ENCODE measurements at regions of chr17 and their contacts with region 1.

Region 1: DNA sequence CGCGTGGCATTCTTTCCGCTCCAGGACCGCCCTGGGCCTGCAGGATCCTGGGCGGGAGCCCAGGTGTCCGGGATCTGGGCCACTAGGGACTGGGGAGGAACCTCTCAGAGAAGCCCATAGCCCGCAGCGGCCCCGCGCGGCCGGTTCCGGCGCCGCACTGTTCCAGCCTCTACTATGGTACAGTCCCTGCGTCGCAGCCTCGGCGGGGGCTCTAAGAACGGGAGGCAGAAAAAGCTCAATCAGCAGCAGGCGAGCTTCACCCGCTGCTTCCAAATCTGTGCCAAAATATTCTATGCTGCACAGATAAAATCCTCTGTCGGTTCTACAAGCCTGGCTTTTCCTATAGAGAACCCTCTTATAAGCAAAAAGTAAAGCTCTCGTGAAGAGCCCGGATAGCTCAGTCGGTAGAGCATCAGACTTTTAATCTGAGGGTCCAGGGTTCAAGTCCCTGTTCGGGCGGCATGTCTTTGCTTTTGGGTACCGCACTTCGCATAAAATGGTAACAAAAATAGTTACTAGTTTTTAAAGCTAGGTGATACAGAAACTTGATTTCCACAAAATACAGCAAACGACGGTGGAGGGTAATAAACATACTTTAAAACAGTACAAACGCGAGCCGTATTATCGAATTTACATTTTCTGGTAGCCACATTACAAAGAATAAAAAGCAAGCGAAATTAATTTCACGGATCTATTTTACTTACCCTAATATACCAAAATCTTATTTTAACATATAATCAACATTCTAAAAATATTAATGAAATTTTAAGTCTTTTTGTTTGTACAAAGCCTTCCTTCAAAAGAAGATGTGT is 661 bp upstream of the ALOXE3 start:
- DNase-seq: peak; percentile 89 to 91
- ATAC-seq: peak; percentile 75 to 89 (median 86)
- H3K4me3 ChIP-seq: peak overlapping the region; percentile 36 to 91 (median 64)
- H3K27ac ChIP-seq: peak overlapping the region; percentile 33 to 85 (median 71)
- H3K4me1 ChIP-seq: peaks cover 22 to 69% (median 55%) of the 10 kb centered on the region in 9 donors
- H3K27me3 ChIP-seq: peaks cover 0 to 78% (median 42%) of the 10 kb centered on the region in 7 donors
- CTCF ChIP-seq: peak; percentile 74 to 97 (median 89)

Region 2: GRCh38 chr17:8079291-8080207 is 39.4 kb before region 1 on chr17:
- intact Hi-C with region 1: loop called in 1 of 10 experiments (anchors 5 kb)
- DNase-seq: peak; percentile 67 to 78
- ATAC-seq: peak; percentile 82 to 94 (median 92)
- H3K4me3 ChIP-seq: peak overlapping the region; percentile 14 to 56 (median 42)
- H3K27ac ChIP-seq: peak overlapping the region in 1 of 10 donors; percentile 53
- H3K4me1 ChIP-seq: peaks cover 3 to 19% (median 14%) of the 10 kb centered on the region in 9 donors
- H3K27me3 ChIP-seq: peaks cover 0 to 98% (median 90%) of the 10 kb centered on the region in 7 donors
- CTCF ChIP-seq: peak; percentile 83 to 96 (median 94)

Region 3: DNA sequence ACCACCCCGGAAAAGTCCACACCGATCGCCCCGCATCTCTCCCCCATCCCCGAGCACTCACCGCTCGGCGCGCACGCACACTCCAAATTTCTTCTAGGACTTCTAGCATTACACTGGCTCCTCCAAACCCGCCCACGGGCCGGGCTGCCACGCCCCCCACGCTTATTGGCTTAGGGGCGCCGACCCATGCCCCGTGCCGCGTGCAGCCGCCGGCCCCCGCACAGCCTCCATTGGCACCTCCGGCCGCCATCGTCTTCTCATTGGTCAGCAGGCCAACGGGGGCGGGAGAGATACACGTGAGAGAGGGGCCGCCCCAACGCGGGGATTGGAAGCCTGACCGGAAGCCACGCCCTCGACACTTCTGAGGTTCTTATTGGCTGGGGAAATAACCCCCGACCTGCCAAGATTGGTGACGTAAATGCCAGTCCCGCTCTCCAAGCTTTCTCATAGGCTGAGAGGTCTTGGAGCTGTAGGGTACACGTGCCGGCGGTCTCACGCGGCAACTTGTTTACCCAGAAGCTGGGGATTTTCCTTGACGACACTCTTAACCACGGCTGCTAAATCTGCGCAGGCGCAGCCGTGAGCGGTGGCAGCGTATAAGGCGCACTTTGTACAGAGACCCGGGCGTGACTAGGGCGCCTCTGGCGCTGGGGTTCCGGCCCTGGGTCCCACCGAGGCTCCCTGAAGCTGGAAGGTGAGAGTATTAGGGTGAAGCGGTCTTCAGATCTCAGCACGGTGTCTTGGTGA is 37.4 kb after region 1 on chr17:
- intact Hi-C with region 1: loop called in 5 of 10 experiments (anchors 1 to 5 kb)
- DNase-seq: peak; percentile 100
- ATAC-seq: peak; percentile 65 to 75 (median 68)
- H3K4me3 ChIP-seq: peak overlapping the region; percentile 66 to 91 (median 81)
- H3K27ac ChIP-seq: peak overlapping the region; percentile 97 to 100 (median 100)
- H3K4me1 ChIP-seq: peaks cover 19 to 91% (median 51%) of the 10 kb centered on the region in 9 donors
- H3K27me3 ChIP-seq: no peaks in the 10 kb centered on the region
- CTCF ChIP-seq: peak in 4 of 9 donors; percentile 12 to 42 (median 28)

Region 4: GRCh38 chr17:8189711-8190477 is 70.9 kb after region 1 on chr17 and contains the start of gene BORCS6:
- intact Hi-C with region 1: loop called (anchors 1 to 10 kb)
- DNase-seq: peak; percentile 96 to 98
- ATAC-seq: peak; percentile 70 to 83 (median 76)
- H3K4me3 ChIP-seq: peak within 1 kb of the TSS; percentile 29 to 90 (median 82)
- H3K27ac ChIP-seq: peak within 1 kb of the TSS; percentile 87 to 99 (median 94)
- H3K4me1 ChIP-seq: peaks cover 11 to 65% (median 42%) of the 10 kb centered on the region in 9 donors
- H3K27me3 ChIP-seq: no peaks in the 10 kb centered on the region
- CTCF ChIP-seq: peak in 4 of 9 donors; percentile 10 to 33 (median 22)
- total RNA-seq, gene BORCS6: 5.3 to 9.4 (median 7.7) TPM

Region 5: DNA sequence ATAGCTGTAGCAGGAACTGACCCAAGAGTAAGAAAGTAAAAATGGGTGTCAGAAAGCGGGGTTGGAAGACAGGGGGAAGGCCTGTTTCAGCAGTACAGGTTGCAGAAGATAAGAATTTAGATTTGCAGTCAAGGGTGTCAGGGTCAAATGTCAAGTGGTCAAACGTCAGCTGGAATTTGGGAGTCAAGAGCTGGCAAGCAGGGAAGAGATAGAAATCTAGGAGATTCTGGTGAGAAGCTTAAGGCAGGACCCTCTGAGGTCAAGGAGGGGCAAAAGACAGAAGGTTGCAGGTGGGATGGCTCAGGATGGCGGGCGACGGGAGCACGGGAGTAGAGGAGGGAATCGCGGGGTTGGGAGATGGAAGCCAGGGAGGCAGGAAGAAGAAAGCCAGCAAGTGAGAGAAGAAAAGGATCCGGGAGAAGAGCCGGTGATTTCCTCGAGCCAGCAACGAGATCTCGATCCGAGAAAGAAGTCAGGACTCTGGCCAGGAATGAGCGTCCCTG is 175.9 kb after region 1 on chr17:
- intact Hi-C with region 1: loop called in 1 of 10 experiments (anchors 5 kb)
- DNase-seq: no peak
- ATAC-seq: peak; percentile 1 to 27 (median 6)
- H3K4me3 ChIP-seq: peak overlapping the region; percentile 10 to 87 (median 65)
- H3K27ac ChIP-seq: peak overlapping the region; percentile 81 to 99 (median 89)
- H3K4me1 ChIP-seq: peaks cover 8 to 27% (median 13%) of the 10 kb centered on the region in 9 donors
- H3K27me3 ChIP-seq: no peaks in the 10 kb centered on the region
- CTCF ChIP-seq: no peak

Measured in heart right ventricle (tissue), 16 donors.